ENCODE measurements at regions of chr9 and their contacts with region 1.

Region 1: DNA sequence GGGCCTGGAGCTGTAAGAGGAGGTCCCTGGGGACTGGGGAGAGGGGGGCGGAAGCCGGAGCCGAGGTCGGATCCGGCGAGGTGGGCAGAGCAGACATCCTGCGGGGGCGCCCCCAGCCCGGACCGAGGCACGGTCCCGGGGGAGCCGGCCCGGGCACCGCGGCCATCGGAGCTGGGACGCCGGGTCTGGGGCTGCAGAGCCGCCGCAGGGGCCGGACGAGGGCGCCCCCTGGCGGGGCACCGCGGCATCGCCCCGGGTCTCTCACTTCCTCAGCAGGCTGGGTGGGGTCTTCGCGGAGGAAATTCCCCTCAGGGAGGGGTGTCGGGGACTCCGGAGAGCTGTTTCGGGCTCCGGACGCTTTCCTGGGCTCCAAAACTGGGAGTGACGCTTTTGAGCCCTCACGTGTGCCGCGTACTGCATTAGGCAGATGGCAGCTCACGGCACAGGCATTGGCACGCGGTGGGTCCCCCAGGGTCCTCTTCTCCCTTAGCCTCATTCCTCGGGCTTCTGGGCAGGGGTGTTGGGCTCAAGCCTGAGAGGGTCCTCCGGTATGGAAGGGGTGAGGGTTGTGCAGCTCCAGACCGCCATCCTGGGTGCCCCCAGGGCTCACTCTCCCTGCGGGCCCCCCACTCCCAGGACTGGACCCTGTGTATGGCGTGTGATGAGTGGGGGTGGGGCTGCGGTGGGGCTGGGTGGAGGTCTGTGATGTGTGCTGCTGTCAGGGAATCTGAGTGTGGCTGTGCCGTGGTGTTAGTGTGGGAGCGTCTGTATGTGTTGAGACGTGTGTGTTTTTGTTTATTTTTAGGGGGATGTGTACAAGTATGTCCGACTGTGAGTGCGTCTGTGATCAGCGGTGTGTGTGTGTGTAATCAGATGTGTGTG is 29.6 kb downstream of the LHX2 start:
- DNase-seq: peak; percentile 61
- ATAC-seq: peak; percentile 32 to 64

Region 2: GRCh38 chr9:123401879-123402513 is 639.2 kb before region 1 on chr9:
- intact Hi-C with region 1: loop called in 1 of 2 experiments (anchors 2 kb)
- DNase-seq: no peak
- ATAC-seq: peak; percentile 80 to 81

Region 3: DNA sequence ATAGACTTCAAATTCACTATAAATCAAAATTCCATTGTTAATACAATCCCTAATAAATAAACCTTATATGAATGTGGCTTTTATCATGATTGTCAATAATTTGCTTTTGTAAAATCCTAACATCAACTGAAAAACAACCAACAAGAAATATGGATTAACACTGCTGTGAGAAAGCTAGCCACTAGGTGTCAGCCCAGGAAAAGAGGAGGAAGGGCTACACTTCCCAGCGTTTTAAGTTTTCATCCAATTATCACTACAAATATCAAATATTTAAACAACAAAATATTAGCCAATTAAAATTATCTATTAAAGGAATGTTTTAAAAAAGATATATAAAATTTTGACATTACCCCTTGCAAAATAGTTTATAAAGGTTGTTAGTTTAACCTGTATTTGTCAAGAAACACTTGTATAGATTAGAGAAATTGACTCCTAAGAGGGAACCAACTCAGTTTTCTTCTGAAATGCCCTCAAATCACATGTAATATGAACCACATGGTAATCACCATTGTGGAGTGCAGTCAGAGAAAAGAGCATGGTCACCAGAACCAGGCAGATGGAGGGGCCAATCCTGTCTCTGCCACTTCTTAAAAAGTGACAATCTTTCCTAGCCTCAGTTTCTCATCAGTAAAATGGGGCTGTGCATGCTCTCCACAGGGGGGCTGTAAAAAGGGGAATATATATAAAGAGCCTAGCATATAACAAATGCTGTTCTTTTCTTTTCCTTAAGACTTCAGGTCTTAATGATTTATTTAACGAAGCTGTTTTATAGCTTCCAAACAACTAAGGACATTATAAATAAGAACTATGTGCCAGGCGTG is 497.0 kb before region 1 on chr9:
- intact Hi-C with region 1: loop called (anchors 2 to 5 kb)
- DNase-seq: no peak
- ATAC-seq: peak in 1 of 2 donors; percentile 52

Region 4: DNA sequence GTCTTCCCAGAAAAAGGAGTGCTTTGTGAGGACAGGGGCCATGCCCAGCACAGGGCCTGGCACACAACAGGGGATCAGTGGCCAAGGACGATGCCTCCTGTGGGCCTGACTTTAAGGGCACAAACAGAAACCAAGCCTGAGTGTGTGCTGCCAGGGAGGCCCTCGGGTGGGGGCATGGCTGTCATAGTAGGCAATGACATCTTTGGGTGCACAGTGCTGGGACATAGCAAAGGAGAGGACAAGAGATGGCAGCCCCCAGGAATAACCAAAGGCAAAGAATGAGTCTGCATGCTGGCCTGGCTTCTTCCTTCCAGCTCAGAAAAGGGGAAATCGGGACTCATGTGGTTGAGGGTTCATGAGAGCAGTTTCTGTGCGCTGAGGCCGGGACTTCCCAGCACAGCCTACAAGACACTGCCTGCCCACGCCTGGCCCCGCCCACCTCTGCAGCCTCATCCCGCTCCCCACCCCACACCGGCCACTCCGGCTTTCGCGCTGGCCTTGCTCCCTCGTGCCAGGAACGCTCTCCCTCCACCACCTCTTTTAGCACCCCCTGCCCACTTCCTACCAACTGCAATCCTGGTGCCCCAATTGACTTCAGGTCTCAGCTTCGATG is 43.4 kb before region 1 on chr9:
- intact Hi-C with region 1: no loop called
- DNase-seq: peak; percentile 56
- ATAC-seq: peak; percentile 51 to 89

Region 5: DNA sequence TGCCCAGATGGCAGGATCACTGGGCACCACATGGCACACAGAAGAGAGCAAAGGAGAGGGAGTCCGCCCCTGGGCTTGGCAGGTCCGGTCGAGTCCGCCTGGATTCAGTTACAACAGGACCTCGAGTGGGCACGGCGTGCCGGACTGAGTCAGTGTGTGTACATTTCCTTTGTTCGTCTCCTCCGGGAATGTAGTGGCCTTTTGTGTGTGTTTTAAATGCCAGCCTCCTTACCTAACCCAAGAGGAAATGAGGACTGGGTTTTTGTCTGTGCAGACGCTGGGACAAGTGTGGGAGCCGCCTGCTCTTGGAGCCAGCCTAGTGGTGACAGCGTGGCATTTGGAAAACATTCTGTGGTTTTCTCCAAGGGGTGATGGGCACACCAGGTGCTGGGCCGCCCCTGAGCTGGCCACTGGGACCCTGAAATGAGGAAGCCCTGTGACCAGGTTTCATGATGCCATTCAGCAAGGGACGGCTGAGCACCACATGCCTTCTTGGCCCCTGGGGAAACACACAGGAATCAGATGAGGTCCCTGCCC is 226.2 kb after region 1 on chr9:
- intact Hi-C with region 1: no loop called
- DNase-seq: no peak
- ATAC-seq: peak; percentile 5 to 13

Measured in left cardiac atrium (tissue), 4 donors.